ENCODE measurements at regions of chr4 and their contacts with region 1.

Region 1: GRCh38 chr4:174764105-174764729 is 64.8 kb downstream of the GLRA3 start:
- DNase-seq: no peak
- ATAC-seq: no peak

Region 2: DNA sequence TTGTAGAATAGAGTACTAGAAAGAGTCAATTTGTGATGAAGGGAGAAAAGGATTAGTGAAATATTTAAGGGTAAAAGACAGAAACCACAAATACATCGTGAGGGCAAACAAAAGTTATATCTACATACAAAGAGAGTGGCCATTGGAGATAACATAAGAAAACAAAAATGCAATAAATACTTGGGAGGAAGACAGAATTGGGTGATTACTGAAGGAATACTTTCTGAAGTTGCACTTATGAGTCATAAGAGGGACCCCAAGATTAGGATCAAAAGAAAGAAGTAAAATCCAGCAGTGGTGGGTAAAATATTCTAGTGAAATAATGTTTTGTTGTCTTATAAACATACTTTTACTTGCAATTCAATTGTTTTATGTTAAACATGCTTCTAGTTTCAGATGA is 11.1 kb after region 1 on chr4:
- intact Hi-C with region 1: loop called (anchors 1 kb)
- DNase-seq: no peak
- ATAC-seq: no peak

Region 3: GRCh38 chr4:174826660-174827059 is 62.4 kb after region 1 on chr4:
- intact Hi-C with region 1: no loop called
- DNase-seq: no peak
- ATAC-seq: no peak

Region 4: GRCh38 chr4:175536852-175537453 is 772.7 kb after region 1 on chr4:
- intact Hi-C with region 1: loop called (anchors 5 kb)
- DNase-seq: no peak
- ATAC-seq: no peak

Measured in left ventricle myocardium superior (tissue), 1 donor.